ENCODE measurements at regions of chr11 and their contacts with region 1.

Region 1: DNA sequence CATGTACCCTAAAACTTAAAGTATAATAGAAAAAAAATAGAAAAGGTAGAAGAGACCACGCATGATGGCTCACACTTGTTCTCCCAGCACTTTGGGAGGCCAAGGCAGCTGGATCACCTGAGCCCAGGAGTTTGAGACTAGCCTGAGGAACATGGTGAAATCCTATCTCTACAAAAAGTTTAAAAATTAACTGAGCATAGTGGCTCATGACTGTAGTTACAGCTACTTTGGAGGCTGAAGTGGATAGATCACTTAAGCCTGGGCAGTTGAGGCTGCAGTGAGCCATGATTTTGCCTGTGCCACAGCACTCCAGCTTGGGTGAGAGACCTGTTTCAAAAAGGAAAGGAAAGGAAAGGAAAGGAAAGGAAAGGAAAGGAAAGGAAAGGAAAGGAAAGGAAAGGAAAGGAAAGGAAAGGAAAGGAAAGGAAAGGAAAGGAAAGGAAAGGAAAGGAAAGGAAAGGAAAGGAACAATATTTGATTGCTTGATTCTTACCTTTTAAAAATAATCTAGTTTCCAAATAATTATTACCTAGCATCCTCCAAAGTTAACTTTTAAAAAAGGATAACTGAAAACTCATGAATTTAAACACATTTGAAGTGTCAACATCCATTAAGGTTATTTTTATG is 99.9 kb upstream of the PAX6 start:
- DNase-seq: no peak
- H3K4me3 ChIP-seq: no peak overlapping the region
- H3K27ac ChIP-seq: no peak overlapping the region
- H3K4me1 ChIP-seq: no peaks in the 10 kb centered on the region
- H3K27me3 ChIP-seq: peaks cover 25% of the 10 kb centered on the region
- CTCF ChIP-seq: no peak

Region 2: GRCh38 chr11:31254431-31254830 is 656.6 kb before region 1 on chr11:
- CTCF ChIA-PET with region 1: interaction called, 10 read pairs
- POLR2A ChIA-PET with region 1: no interaction called
- intact Hi-C with region 1: no loop called
- DNase-seq: no peak
- H3K4me3 ChIP-seq: no peak overlapping the region
- H3K27ac ChIP-seq: no peak overlapping the region
- H3K4me1 ChIP-seq: no peaks in the 10 kb centered on the region
- H3K27me3 ChIP-seq: no peaks in the 10 kb centered on the region
- CTCF ChIP-seq: no peak